ENCODE measurements at regions of chr17 and their contacts with region 1.

Region 1: GRCh38 chr17:37239690-37240334 is 136.0 kb upstream of the C17orf78 start:
- DNase-seq: no peak
- H3K4me3 Mint-ChIP-seq: no peak overlapping the region
- H3K27ac Mint-ChIP-seq: no peak overlapping the region
- H3K4me1 Mint-ChIP-seq: no peaks in the 10 kb centered on the region
- H3K27me3 Mint-ChIP-seq: no peaks in the 10 kb centered on the region

Region 2: GRCh38 chr17:37047631-37048104 is 192.1 kb before region 1 on chr17:
- CTCF ChIA-PET with region 1: interaction called, 14 read pairs
- POLR2A ChIA-PET with region 1: no interaction called
- DNase-seq: peak; percentile 84
- H3K4me3 Mint-ChIP-seq: no peak overlapping the region
- H3K27ac Mint-ChIP-seq: no peak overlapping the region
- H3K4me1 Mint-ChIP-seq: peaks cover 9% of the 10 kb centered on the region
- H3K27me3 Mint-ChIP-seq: no peaks in the 10 kb centered on the region

Region 3: GRCh38 chr17:37255432-37255831 is 15.6 kb after region 1 on chr17:
- CTCF ChIA-PET with region 1: interaction called, 11 read pairs
- POLR2A ChIA-PET with region 1: no interaction called
- DNase-seq: no peak
- H3K4me3 Mint-ChIP-seq: no peak overlapping the region
- H3K27ac Mint-ChIP-seq: no peak overlapping the region
- H3K4me1 Mint-ChIP-seq: no peaks in the 10 kb centered on the region
- H3K27me3 Mint-ChIP-seq: no peaks in the 10 kb centered on the region

Region 4: DNA sequence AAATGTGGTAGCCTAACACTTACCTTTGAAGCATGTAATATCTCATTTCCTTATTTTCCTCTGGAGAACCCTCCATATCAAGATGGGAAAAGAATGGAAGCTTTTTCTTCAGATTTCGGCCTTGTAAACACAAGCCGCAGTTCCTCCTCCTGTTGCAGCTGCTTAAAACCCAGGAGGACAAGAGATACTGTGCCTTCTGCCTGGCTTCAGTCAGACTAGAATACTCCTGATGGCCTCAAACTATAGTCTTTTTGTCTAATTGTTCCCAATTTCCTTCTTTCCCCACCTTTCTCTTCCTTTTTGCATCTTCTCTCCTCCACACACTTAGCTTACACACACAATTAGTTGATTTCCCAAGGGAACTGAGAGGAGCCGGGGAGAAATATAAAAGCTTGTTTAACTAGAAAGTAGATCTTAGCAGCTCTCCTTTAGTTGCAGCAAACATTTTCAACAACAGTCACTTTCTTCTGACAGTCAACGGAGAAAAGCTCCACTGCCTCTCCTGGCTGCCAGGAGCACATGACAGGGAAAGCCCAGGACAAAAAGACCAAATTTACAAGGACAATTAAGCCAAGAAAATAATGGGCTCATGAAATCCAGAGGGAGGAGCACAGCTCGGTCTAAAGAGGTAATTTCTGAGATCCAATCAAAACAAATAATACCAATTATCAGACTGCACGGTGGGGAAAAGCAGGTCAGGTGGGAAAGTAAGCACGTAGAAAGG is 59.6 kb after region 1 on chr17:
- CTCF ChIA-PET with region 1: no interaction called
- POLR2A ChIA-PET with region 1: no interaction called
- DNase-seq: no peak
- H3K4me3 Mint-ChIP-seq: no peak overlapping the region
- H3K27ac Mint-ChIP-seq: no peak overlapping the region
- H3K4me1 Mint-ChIP-seq: peaks cover 7% of the 10 kb centered on the region
- H3K27me3 Mint-ChIP-seq: no peaks in the 10 kb centered on the region